HepG2 (cell line): ENCODE measurements at regions of chr16 and their contacts with region 1.

Region 1: DNA sequence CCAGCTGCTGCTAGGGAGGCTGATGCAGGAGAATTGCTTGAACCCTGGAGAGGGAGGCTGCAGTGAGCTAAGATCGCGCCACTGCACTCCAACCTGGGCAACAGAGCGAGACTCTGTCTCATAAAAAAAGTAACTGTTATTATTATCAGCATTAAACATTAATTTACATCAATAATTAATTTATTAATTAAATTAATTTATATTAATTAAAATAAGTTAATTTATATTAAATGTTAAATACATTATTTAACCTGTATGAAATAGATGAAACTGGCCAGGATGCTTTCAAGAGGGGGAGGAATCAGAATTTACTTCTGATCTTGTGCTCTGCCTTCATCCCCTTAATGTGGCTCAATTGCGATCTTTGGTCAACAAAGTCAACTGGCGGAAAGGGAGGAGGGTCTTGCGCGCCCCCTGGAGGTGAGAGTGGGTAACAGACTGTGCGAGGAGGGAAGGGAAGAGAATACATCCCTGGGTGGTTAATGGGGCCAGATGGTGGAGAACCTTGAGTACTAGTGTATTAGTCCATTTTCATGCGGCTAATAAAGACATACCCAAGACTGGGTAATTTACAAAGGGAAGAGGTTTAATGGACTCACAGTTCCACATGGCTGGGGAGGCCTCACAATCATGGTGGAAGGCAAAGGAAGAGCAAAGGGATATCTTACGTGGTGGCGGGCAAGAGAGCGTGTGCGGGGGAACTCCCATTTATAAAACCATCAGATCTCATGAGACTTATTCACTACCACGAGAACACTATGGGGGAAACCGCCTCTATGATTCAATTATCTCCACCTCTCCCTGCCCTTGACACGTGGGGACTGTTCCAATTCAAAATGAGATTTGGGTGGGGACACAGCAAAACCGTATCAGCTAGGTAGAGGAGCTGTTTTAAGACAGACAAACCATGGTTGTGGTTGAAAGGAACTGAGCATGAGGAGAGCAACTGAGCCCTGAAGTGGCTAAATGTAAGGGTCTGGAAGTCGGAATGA is 15.7 kb upstream of the CPPED1 start:
- DNase-seq: peak; percentile 79
- ATAC-seq: peak; percentile 77
- H3K4me3 ChIP-seq: no peak overlapping the region
- H3K27ac ChIP-seq: no peak overlapping the region
- H3K4me1 ChIP-seq: peaks cover 34% of the 10 kb centered on the region
- H3K27me3 ChIP-seq: 0 out of 5 replicates have a peak, but pooled peaks cover 0 to 13% of the 10 kb centered on the region in 2 experiments
- CTCF ChIP-seq: peak; percentile 97
- EP300 ChIP-seq: no peak
- POLR2A ChIP-seq: no peak
- RAD21 ChIP-seq: peak; percentile 90

Region 2: DNA sequence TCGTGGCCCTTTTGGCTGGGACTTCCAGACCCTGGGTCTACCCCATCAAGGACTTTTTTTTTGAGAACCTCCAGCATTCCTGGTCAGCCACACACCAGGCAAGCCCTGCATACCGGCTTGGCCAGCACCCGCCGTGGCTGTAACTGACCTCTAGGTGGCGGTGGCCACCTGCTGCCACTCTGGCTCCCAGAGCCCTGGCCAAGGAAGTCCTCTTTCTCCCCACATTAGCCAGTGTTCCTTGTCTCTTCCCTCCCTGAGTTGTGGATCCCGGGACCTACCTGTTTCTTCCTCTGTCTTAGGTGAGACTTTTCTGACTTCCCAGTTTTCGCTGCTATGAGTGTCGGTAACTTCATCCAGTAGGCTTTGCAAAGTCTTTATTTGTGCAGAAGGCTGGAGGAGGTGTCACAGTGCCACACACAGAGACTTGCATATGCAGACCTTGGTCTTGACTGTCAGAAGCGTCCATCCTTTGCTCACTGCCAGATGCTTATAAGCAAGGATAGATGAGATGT is 364.1 kb before region 1 on chr16:
- CTCF ChIA-PET with region 1: interaction called, 43 read pairs
- POLR2A ChIA-PET with region 1: no interaction called
- in situ Hi-C with region 1: loop called (anchors 5 kb)
- intact Hi-C with region 1: loop called (anchors 1 kb)
- DNase-seq: peak; percentile 53
- ATAC-seq: peak; percentile 95
- H3K4me3 ChIP-seq: no peak overlapping the region
- H3K27ac ChIP-seq: no peak overlapping the region
- H3K4me1 ChIP-seq: peaks cover 20% of the 10 kb centered on the region
- H3K27me3 ChIP-seq: no peaks in the 10 kb centered on the region
- CTCF ChIP-seq: peak; percentile 99
- EP300 ChIP-seq: no peak
- POLR2A ChIP-seq: no peak
- RAD21 ChIP-seq: peak; percentile 98

Region 3: GRCh38 chr16:12661656-12662172 is 157.7 kb before region 1 on chr16:
- CTCF ChIA-PET with region 1: no interaction called
- POLR2A ChIA-PET with region 1: no interaction called
- in situ Hi-C with region 1: no loop called
- intact Hi-C with region 1: loop called (anchors 5 kb)
- DNase-seq: peak; percentile 76
- ATAC-seq: peak; percentile 85
- H3K4me3 ChIP-seq: no peak overlapping the region
- H3K27ac ChIP-seq: no peak overlapping the region
- H3K4me1 ChIP-seq: no peaks in the 10 kb centered on the region
- H3K27me3 ChIP-seq: no peaks in the 10 kb centered on the region
- CTCF ChIP-seq: no peak
- EP300 ChIP-seq: no peak
- POLR2A ChIP-seq: no peak
- RAD21 ChIP-seq: peak; percentile 61

Region 4: DNA sequence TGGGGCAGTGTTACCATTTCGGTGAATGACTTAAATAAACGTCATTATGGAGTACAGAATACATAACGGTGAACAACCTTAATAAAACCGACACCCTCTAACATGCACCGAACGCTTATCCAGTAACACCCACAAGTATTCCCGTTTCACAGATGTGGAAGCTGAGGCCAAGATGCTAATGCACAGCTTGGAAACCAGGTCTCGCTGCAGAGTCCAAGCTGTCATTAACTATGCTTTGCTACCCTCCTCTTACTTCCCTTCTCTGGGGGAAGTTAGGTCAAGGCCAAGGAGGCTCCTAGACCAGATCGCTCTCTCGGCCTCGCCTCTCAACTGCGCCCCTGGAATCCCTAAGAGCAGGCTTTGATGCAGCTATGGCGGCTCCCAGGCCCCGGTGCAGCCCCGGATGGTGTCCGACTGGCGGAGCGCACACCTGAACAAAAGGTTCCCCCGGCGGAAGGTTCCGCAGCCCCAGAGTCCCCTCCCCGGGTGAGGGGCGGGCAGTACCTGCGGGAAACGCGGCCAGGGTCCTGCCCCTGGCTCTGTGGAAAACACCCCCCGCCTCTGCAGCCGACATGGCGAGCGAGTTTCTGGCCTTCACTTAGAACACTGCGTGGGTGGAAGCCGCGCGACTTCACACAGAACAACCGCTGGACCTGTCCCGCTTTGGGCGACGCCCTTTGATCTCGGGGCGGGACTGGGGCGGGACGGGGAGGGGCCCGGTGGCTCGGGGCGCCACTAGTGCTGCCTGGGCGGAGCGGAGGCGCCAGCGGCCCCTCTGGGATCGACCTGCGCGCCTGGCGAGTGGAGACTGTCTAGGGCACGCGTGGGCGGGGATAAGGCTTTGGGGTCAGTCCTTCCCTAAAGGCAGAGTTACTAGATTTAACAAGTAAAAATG is 16.0 kb before region 1 on chr16 and contains the start of gene CPPED1:
- CTCF ChIA-PET with region 1: no interaction called
- POLR2A ChIA-PET with region 1: interaction called, 10 read pairs
- in situ Hi-C with region 1: no loop called
- intact Hi-C with region 1: no loop called
- DNase-seq: peak; percentile 93
- ATAC-seq: peak; percentile 92
- H3K4me3 ChIP-seq: peak within 1 kb of the TSS; percentile 86 to 97 (median 87)
- H3K27ac ChIP-seq: peak within 1 kb of the TSS; percentile 97
- H3K4me1 ChIP-seq: peaks cover 58% of the 10 kb centered on the region
- H3K27me3 ChIP-seq: peaks cover 0 to 7% of the 10 kb centered on the region in 2 experiments; a peak in 1 of 5 replicates
- CTCF ChIP-seq: peak; percentile 45
- EP300 ChIP-seq: peak in 1 of 2 experiments; percentile 89
- POLR2A ChIP-seq: peak; percentile 94 to 97
- RAD21 ChIP-seq: peak; percentile 78
- total RNA-seq, gene CPPED1: 66.6 and 118 TPM in 2 replicates

Region 5: GRCh38 chr16:12874186-12874585 is 54.8 kb after region 1 on chr16:
- CTCF ChIA-PET with region 1: no interaction called
- POLR2A ChIA-PET with region 1: no interaction called
- in situ Hi-C with region 1: no loop called
- intact Hi-C with region 1: no loop called
- DNase-seq: no peak
- ATAC-seq: no peak
- H3K4me3 ChIP-seq: no peak overlapping the region
- H3K27ac ChIP-seq: no peak overlapping the region
- H3K4me1 ChIP-seq: no peaks in the 10 kb centered on the region
- H3K27me3 ChIP-seq: peaks cover 0 to 7% of the 10 kb centered on the region in 2 experiments; a peak in 1 of 5 replicates
- CTCF ChIP-seq: no peak
- EP300 ChIP-seq: no peak
- POLR2A ChIP-seq: no peak
- RAD21 ChIP-seq: no peak

Region 6: GRCh38 chr16:13070268-13070667 is 250.8 kb after region 1 on chr16:
- CTCF ChIA-PET with region 1: no interaction called
- POLR2A ChIA-PET with region 1: no interaction called
- in situ Hi-C with region 1: no loop called
- intact Hi-C with region 1: no loop called
- DNase-seq: no peak
- ATAC-seq: no peak
- H3K4me3 ChIP-seq: no peak overlapping the region
- H3K27ac ChIP-seq: no peak overlapping the region
- H3K4me1 ChIP-seq: no peaks in the 10 kb centered on the region
- H3K27me3 ChIP-seq: no peaks in the 10 kb centered on the region
- CTCF ChIP-seq: no peak
- EP300 ChIP-seq: no peak
- POLR2A ChIP-seq: no peak
- RAD21 ChIP-seq: no peak